ENCODE measurements at regions of chr17 and their contacts with region 1.

Region 1: GRCh38 chr17:3048767-3049471 is 14.5 kb downstream of the OR1D5 start:
- DNase-seq: peak; percentile 86 to 98 (median 91)
- ATAC-seq: peak; percentile 98
- H3K4me3 ChIP-seq: peak overlapping the region; percentile 76
- H3K4me3 Mint-ChIP-seq: peak overlapping the region; percentile 92
- H3K27ac ChIP-seq: peak overlapping the region in 1 of 2 donors; percentile 26
- H3K27ac Mint-ChIP-seq: peak overlapping the region; percentile 64
- H3K4me1 ChIP-seq: peaks cover 16% of the 10 kb centered on the region
- H3K4me1 Mint-ChIP-seq: peaks cover 12% of the 10 kb centered on the region
- H3K27me3 ChIP-seq: no peaks in the 10 kb centered on the region
- H3K27me3 Mint-ChIP-seq: no peaks in the 10 kb centered on the region
- CTCF ChIP-seq: peak; percentile 64

Region 2: GRCh38 chr17:3647769-3648555 is 599.0 kb after region 1 on chr17:
- CTCF ChIA-PET with region 1: interaction called, 7 read pairs
- POLR2A ChIA-PET with region 1: no interaction called
- intact Hi-C with region 1: loop called in 1 of 2 experiments (anchors 2 kb)
- DNase-seq: peak in 10 of 14 experiments; percentile 14 to 60 (median 32)
- ATAC-seq: peak; percentile 68
- H3K4me3 ChIP-seq: no peak overlapping the region
- H3K4me3 Mint-ChIP-seq: no peak overlapping the region
- H3K27ac ChIP-seq: no peak overlapping the region
- H3K27ac Mint-ChIP-seq: no peak overlapping the region
- H3K4me1 ChIP-seq: peaks cover 3% of the 10 kb centered on the region
- H3K4me1 Mint-ChIP-seq: no peaks in the 10 kb centered on the region
- H3K27me3 ChIP-seq: no peaks in the 10 kb centered on the region
- H3K27me3 Mint-ChIP-seq: no peaks in the 10 kb centered on the region
- CTCF ChIP-seq: peak; percentile 20

Region 3: DNA sequence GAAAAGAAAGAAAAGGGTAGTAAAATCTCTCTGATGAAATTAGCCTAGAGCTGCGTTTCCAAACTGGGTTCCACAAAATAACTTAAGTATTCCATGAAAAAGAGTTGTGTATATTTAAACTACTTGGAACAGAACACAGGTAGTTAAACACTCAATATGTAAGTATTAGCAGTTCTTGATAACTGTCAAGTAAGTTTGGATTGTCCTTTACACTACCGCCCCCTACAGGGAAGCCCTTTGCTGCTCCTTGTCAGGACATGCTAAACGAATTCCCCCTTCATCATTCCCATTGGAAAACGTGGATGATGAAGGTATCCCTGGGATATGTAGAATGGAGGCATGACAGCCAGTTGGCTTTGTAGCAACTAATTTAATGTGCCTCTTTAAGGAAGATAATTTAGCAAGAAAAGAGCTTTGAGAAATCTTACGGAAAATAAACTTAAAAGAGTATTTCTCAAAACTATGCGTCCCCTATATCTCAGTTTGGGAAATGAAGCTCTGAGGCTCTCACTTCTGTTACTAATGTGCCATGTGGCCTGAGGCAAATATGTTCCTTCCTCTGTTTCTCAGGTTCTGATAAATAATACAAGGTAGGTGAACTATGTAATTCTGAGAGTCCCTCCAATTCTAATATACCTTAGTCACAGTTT is 778.3 kb after region 1 on chr17:
- CTCF ChIA-PET with region 1: no interaction called
- POLR2A ChIA-PET with region 1: no interaction called
- intact Hi-C with region 1: loop called in 1 of 2 experiments (anchors 10 kb)
- DNase-seq: peak; percentile 44 to 85 (median 66)
- ATAC-seq: peak; percentile 67
- H3K4me3 ChIP-seq: no peak overlapping the region
- H3K4me3 Mint-ChIP-seq: no peak overlapping the region
- H3K27ac ChIP-seq: no peak overlapping the region
- H3K27ac Mint-ChIP-seq: no peak overlapping the region
- H3K4me1 ChIP-seq: no peaks in the 10 kb centered on the region
- H3K4me1 Mint-ChIP-seq: peaks cover 6% of the 10 kb centered on the region
- H3K27me3 ChIP-seq: no peaks in the 10 kb centered on the region
- H3K27me3 Mint-ChIP-seq: no peaks in the 10 kb centered on the region
- CTCF ChIP-seq: peak; percentile 84

Measured in CD4-positive, alpha-beta T cell (primary cell).